ENCODE measurements at regions of chr16 and their contacts with region 1.

Region 1: GRCh38 chr16:53449632-53450517 is 15.6 kb downstream of the RBL2 start:
- DNase-seq: peak; percentile 20
- CTCF ChIP-seq: no peak

Region 2: DNA sequence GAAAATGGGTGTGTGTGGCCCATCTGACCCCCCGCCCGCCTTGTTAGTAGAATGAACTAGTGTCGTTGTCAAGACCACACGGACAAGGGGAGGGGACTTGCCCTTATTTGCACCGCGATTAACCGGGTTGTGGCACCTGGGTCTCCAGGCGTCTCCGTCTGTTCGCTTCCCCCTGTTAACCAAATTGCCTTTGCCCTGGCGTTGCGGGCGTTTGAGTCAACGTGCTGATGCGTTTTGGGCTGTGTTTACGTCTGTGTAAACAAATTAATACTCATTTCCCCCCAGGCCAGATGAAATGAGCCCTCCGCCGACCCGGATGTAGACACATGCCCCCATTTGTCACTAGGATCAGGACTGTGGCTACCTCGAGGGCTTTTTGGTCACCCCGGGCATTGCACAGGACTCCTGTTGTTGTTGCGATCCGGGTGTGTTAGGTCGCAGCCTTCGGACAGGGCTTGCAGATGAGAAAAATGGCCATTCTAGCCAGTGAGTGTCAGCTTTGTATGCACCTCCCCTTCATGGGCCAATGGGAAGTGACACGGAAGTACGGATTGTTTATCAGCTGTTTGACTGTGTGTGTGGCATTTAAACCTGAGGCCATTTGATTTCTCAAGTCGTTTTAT is 14.7 kb before region 1 on chr16:
- CTCF ChIA-PET with region 1: interaction called, 28 read pairs
- POLR2A ChIA-PET with region 1: interaction called, 12 read pairs
- DNase-seq: peak; percentile 81
- CTCF ChIP-seq: no peak

Region 3: GRCh38 chr16:53530046-53530445 is 80.2 kb after region 1 on chr16:
- CTCF ChIA-PET with region 1: no interaction called
- POLR2A ChIA-PET with region 1: no interaction called
- DNase-seq: no peak
- CTCF ChIP-seq: no peak

Measured in GM10248 (cell line).